GM12878 (cell line): ENCODE measurements at regions of chr3 and their contacts with region 1.

Region 1: DNA sequence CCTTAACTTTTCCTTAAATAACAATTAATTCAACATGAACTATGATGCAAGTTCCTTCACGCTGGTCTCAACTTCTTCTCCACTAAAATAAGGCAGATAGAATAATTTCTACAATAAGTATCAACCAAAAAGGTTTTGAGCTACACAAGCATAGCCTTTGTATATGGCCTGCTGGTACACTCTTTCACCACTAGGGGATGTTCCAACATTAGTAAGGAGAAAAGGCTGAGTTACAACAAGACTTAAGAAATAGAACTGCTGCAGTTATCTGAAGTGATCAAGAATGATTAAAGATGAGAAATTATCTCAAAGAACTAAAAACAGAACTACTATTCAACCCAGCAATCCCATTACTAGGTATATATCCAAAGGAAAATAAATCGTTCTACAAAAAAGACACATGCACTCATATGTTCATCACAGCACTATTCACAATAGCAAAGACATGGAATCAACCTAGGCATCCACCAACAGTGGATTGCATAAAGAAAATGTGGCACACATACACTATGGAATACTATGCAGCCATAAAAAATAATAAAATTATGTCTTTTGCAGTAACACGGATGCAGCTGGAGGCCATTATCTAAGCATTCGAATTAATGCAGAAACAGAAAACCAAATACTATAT is 14.4 kb downstream of the ATP13A3 start:
- DNase-seq: no peak
- ATAC-seq: peak; percentile 87
- H3K4me3 ChIP-seq: no peak overlapping the region
- H3K27ac ChIP-seq: no peak overlapping the region
- H3K4me1 ChIP-seq: no peaks in the 10 kb centered on the region; the same call in 1 of the 2 replicates
- H3K27me3 ChIP-seq: no peaks in the 10 kb centered on the region
- CTCF ChIP-seq: peak; percentile 97 to 99 (median 99); a peak in 5 of 6 replicates
- EP300 ChIP-seq: no peak
- POLR2A ChIP-seq: no peak
- RAD21 ChIP-seq: peak; percentile 100

Region 2: GRCh38 chr3:194486540-194487288 is 14.3 kb after region 1 on chr3 and contains the start of gene ATP13A3:
- CTCF ChIA-PET with region 1: interaction called, 58 read pairs
- POLR2A ChIA-PET with region 1: interaction called, 11 read pairs
- RAD21 ChIA-PET with region 1: interaction called, 39 read pairs
- SMC1A ChIA-PET with region 1: interaction called, 57 read pairs
- in situ Hi-C with region 1: no loop called
- intact Hi-C with region 1: no loop called
- DNase-seq: no peak
- ATAC-seq: peak; percentile 70
- H3K4me3 ChIP-seq: peak within 1 kb of the TSS; percentile 84
- H3K27ac ChIP-seq: peak within 1 kb of the TSS; percentile 92
- H3K4me1 ChIP-seq: peaks cover 20% of the 10 kb centered on the region
- H3K27me3 ChIP-seq: no peaks in the 10 kb centered on the region
- CTCF ChIP-seq: no peak
- EP300 ChIP-seq: no peak
- POLR2A ChIP-seq: peak; percentile 88
- RAD21 ChIP-seq: no peak
- polyA plus RNA-seq, gene ATP13A3: 14.0 to 17.7 TPM

Region 3: DNA sequence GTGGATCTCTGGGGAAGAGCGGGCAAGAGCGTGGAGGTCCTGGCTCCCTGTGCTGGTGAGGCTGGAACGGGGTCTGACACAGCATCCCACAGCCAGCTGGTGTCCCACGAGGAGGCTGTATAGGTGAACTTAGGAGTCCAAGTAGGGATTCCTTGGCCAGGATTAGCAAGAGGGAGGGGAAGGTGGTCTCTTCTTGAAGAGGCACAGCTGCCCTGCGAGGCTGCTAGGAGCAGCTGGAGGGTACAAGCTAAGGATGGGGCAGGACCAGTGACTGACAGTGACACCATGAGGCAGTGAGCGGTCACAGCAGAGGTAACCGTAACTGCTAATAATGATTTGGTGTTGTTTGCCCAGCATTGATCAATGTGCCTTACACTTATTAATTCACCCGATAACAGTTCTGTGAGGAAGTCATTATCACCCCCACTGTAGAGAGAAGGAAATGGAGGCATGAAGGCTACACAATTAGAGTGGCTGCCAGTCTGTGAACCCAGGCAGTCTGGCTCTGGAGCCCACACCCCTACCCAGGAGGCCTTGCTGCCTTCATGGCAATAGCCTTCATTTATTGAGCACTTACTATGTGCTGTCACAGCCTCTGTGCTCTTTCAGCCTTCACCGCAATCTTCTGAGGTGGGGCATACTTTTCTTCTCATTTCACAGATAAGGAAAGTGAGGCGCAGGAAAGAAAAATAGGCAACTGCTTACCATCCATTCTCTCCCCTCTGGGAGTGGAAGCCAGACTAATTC is 101.5 kb after region 1 on chr3:
- CTCF ChIA-PET with region 1: interaction called, 237 read pairs
- POLR2A ChIA-PET with region 1: interaction called, 5 read pairs
- RAD21 ChIA-PET with region 1: interaction called, 67 read pairs
- SMC1A ChIA-PET with region 1: interaction called, 110 read pairs
- in situ Hi-C with region 1: no loop called
- intact Hi-C with region 1: loop called (anchors 1 kb)
- DNase-seq: no peak
- ATAC-seq: peak; percentile 97
- H3K4me3 ChIP-seq: no peak overlapping the region
- H3K27ac ChIP-seq: no peak overlapping the region
- H3K4me1 ChIP-seq: no peaks in the 10 kb centered on the region; the same call in 1 of the 2 replicates
- H3K27me3 ChIP-seq: no peaks in the 10 kb centered on the region
- CTCF ChIP-seq: peak; percentile 69 to 78 (median 75)
- EP300 ChIP-seq: no peak
- POLR2A ChIP-seq: no peak
- RAD21 ChIP-seq: peak; percentile 83

Region 4: DNA sequence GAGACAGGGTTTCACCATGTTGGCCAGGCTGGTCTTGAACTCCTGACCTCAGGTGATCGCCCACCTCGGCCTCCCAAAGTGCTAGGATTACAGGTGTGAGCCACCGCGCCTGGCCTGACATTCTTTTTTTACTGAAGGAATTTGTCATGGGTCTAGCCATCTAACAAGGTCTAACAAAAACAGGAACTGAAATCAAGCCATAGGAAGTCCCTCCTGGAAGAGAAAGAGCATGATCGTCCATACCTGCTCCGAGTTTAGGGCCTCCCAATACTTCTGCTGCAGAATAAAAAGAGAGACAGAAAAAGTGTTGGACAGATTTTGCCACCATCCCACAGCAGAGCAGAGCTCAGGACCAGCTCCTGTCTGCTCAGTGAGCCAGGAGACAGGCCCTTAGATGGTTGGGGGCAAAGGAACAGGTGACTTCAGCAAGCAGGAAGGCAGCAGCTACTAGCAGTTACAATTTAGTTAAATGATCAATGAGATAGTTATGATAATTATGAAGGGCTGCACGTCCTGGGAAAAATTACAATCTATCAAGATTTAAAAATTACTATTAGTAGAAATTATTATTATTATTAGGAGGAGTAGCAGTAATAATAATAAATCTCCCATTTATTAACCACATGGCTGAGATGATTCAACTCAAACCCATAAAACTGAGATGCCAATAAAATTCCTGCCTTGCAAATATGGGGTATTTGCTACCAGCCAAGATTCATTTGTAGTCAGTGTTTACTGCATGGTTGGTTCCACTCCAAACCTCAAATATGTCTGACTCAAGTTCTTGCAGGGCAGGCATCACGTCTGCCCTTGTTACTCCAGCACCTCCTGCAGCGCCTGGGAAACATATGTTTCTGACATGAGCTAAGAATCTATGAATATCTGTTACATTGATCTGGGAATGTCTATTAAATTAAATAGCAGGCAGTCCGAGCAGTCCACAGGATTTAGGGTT is 120.7 kb after region 1 on chr3:
- CTCF ChIA-PET with region 1: interaction called, 131 read pairs
- POLR2A ChIA-PET with region 1: interaction called, 3 read pairs
- RAD21 ChIA-PET with region 1: interaction called, 56 read pairs
- SMC1A ChIA-PET with region 1: interaction called, 41 read pairs
- in situ Hi-C with region 1: no loop called
- intact Hi-C with region 1: loop called (anchors 1 kb)
- DNase-seq: no peak
- ATAC-seq: peak; percentile 70
- H3K4me3 ChIP-seq: no peak overlapping the region
- H3K27ac ChIP-seq: no peak overlapping the region
- H3K4me1 ChIP-seq: peaks cover 3% of the 10 kb centered on the region
- H3K27me3 ChIP-seq: no peaks in the 10 kb centered on the region
- CTCF ChIP-seq: no peak
- EP300 ChIP-seq: no peak
- POLR2A ChIP-seq: no peak
- RAD21 ChIP-seq: no peak

Region 5: DNA sequence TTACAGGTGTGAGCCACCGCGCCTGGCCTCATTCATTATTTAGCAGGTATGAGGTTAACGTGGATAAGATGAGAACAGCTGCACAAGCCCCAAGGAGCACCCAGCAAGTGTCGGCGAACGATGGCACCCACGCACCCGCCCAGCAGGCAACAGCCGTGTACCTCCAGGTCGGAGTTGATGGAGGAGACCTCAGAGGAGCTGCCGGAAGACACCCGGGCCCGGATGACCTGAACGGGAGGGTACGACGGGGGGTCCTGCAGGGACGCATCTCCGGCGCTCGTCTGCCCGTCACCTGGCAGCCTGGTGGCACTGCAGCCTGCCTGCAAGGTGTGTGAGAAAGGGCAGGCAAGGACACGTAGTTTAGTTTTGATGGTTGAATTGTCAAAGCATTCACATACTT is 131.7 kb after region 1 on chr3:
- CTCF ChIA-PET with region 1: no interaction called
- POLR2A ChIA-PET with region 1: no interaction called
- RAD21 ChIA-PET with region 1: no interaction called
- SMC1A ChIA-PET with region 1: no interaction called
- in situ Hi-C with region 1: no loop called
- intact Hi-C with region 1: no loop called
- DNase-seq: no peak
- ATAC-seq: no peak
- H3K4me3 ChIP-seq: no peak overlapping the region
- H3K27ac ChIP-seq: no peak overlapping the region
- H3K4me1 ChIP-seq: no peaks in the 10 kb centered on the region
- H3K27me3 ChIP-seq: no peaks in the 10 kb centered on the region; a peak in 1 of 4 replicates
- CTCF ChIP-seq: no peak
- EP300 ChIP-seq: no peak
- POLR2A ChIP-seq: no peak
- RAD21 ChIP-seq: no peak